ENCODE measurements at regions of chr10 and their contacts with region 1.

Region 1: GRCh38 chr10:117442944-117443685 is 67.9 kb upstream of the PDZD8 start:
- DNase-seq: peak; percentile 87
- H3K4me3 ChIP-seq: no peak overlapping the region
- H3K27ac ChIP-seq: no peak overlapping the region
- H3K4me1 ChIP-seq: peaks cover 5% of the 10 kb centered on the region
- H3K27me3 ChIP-seq: peaks cover 1 to 2% of the 10 kb centered on the region in 2 experiments
- CTCF ChIP-seq: peak; percentile 83 to 96
- POLR2A ChIP-seq: no peak

Region 2: DNA sequence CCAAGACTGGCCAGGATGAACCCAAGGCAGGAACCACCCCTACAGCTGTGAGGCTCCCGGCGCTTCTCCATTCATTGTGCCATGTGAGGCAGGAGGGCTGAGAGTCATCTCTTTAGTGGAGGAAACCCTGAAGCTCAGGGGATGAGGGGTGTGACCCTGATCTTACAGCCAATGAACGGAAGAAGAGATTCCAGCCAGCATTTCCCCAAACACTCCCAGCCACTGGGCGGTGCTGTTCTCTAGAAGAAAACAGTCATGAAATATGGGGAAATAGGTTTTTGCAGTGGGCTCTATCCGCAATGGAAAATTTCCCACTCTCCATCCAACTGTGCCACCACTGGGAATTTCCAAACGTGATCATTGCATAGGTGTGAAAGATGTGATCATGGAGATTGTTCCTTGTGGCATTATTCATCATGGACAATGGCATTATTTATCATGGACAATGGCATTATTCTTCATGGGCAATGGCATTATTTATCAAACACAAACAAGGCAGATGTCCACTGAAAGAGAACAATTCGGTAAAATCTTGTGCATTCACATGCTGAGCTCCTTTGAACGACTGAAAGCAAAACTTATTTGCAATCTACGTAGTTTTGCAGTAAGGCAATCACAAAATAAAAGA is 216.2 kb before region 1 on chr10:
- CTCF ChIA-PET with region 1: interaction called, 11 read pairs
- POLR2A ChIA-PET with region 1: no interaction called
- dilution Hi-C with region 1: no loop called
- intact Hi-C with region 1: no loop called
- DNase-seq: peak; percentile 18
- H3K4me3 ChIP-seq: no peak overlapping the region
- H3K27ac ChIP-seq: no peak overlapping the region
- H3K4me1 ChIP-seq: no peaks in the 10 kb centered on the region
- H3K27me3 ChIP-seq: no peaks in the 10 kb centered on the region
- CTCF ChIP-seq: peak; percentile 34 to 41
- POLR2A ChIP-seq: no peak

Region 3: GRCh38 chr10:117424895-117425638 is 18.0 kb before region 1 on chr10:
- CTCF ChIA-PET with region 1: interaction called, 30 read pairs
- POLR2A ChIA-PET with region 1: no interaction called
- dilution Hi-C with region 1: no loop called
- intact Hi-C with region 1: no loop called
- DNase-seq: no peak
- H3K4me3 ChIP-seq: no peak overlapping the region
- H3K27ac ChIP-seq: no peak overlapping the region
- H3K4me1 ChIP-seq: no peaks in the 10 kb centered on the region
- H3K27me3 ChIP-seq: peaks cover 0 to 1% of the 10 kb centered on the region in 2 experiments
- CTCF ChIP-seq: no peak
- POLR2A ChIP-seq: no peak

Region 4: DNA sequence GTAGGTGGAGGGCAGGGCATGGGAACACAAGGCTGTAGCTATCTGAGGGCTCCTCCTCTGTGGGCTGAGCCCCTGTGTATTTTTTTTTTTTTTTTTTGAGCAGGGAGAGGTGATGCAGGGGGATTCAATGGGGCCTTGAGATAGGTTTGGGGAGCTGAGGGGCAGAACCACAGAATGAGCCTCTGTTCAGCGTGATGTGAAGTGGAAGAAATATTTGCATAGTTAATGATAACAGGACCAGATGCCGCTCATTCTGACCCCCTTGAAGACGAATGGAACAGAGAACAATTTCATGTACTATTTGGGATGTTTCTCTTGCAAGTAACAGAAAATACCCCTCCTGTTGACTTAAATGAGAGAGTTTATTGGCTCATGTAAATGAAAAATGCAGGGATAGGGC is 29.8 kb after region 1 on chr10:
- CTCF ChIA-PET with region 1: interaction called, 279 read pairs
- POLR2A ChIA-PET with region 1: no interaction called
- dilution Hi-C with region 1: no loop called
- intact Hi-C with region 1: loop called (anchors 1 kb)
- DNase-seq: no peak
- H3K4me3 ChIP-seq: no peak overlapping the region
- H3K27ac ChIP-seq: no peak overlapping the region
- H3K4me1 ChIP-seq: no peaks in the 10 kb centered on the region
- H3K27me3 ChIP-seq: peaks cover 0 to 6% of the 10 kb centered on the region in 2 experiments
- CTCF ChIP-seq: no peak
- POLR2A ChIP-seq: no peak

Region 5: GRCh38 chr10:117496616-117497028 is 53.5 kb after region 1 on chr10:
- CTCF ChIA-PET with region 1: interaction called, 92 read pairs
- POLR2A ChIA-PET with region 1: no interaction called
- dilution Hi-C with region 1: no loop called
- intact Hi-C with region 1: loop called (anchors 1 kb)
- DNase-seq: peak; percentile 85
- H3K4me3 ChIP-seq: no peak overlapping the region
- H3K27ac ChIP-seq: no peak overlapping the region
- H3K4me1 ChIP-seq: no peaks in the 10 kb centered on the region
- H3K27me3 ChIP-seq: peaks cover 13% of the 10 kb centered on the region in 2 experiments
- CTCF ChIP-seq: peak; percentile 93
- POLR2A ChIP-seq: no peak

Region 6: GRCh38 chr10:118241229-118242137 is 798.4 kb after region 1 on chr10:
- CTCF ChIA-PET with region 1: interaction called, 38 read pairs
- POLR2A ChIA-PET with region 1: no interaction called
- dilution Hi-C with region 1: no loop called
- intact Hi-C with region 1: loop called (anchors 1 kb)
- DNase-seq: peak; percentile 74
- H3K4me3 ChIP-seq: no peak overlapping the region
- H3K27ac ChIP-seq: no peak overlapping the region
- H3K4me1 ChIP-seq: no peaks in the 10 kb centered on the region
- H3K27me3 ChIP-seq: peaks cover 7 to 12% of the 10 kb centered on the region in 2 experiments
- CTCF ChIP-seq: peak; percentile 81 to 88
- POLR2A ChIP-seq: no peak

Measured in endothelial cell of umbilical vein (primary cell).